CD8-positive, alpha-beta T cell (primary cell): ENCODE measurements at regions of chr18 and their contacts with region 1.

Region 1: GRCh38 chr18:59056706-59057492 is 82.8 kb upstream of the SEC11C start:
- DNase-seq: peak in 4 of 9 experiments; percentile 33 to 55 (median 48)
- ATAC-seq: no peak
- H3K4me3 ChIP-seq: no peak overlapping the region
- H3K4me3 Mint-ChIP-seq: no peak overlapping the region
- H3K27ac ChIP-seq: no peak overlapping the region
- H3K27ac Mint-ChIP-seq: no peak overlapping the region
- H3K4me1 ChIP-seq: no peaks in the 10 kb centered on the region
- H3K4me1 Mint-ChIP-seq: no peaks in the 10 kb centered on the region
- H3K27me3 ChIP-seq: no peaks in the 10 kb centered on the region
- H3K27me3 Mint-ChIP-seq: peaks cover 25% of the 10 kb centered on the region
- CTCF ChIP-seq: peak; percentile 40

Region 2: DNA sequence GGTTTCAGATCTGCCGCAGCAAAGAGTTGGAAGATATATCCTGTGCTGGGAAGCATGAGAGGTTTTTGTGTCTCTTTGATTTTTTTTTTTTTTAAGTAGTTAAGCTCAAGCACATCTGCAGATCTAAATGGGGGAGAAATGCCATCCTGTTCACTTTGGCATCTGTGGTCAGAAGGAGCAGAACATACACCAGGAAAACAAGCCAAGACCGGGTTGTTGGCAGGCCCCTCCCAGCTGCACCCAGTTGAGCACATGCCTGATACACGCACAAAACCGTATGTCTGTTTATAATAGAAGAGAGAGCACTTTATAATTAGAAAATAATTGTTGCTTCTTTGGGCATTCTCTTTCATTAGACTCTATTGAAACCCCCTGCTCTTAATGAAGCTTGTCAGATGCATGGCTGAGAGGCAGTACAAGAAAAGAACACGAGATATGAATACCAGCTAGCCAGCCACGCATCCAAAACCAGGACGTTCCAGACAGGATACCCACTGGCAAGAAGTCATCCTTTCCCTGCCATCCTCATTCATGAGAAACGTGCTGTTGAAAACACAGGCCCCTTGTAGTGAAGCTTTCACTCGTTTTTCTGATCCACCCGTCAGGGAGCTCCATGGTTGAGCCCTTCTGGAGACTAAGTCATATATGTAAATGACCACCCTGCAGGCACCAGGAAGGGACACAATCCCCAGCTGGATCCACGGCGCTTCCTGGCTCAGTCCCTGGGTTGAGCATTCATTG is 580.2 kb before region 1 on chr18:
- CTCF ChIA-PET with region 1: no interaction called
- POLR2A ChIA-PET with region 1: no interaction called
- intact Hi-C with region 1: no loop called
- DNase-seq: no peak
- ATAC-seq: no peak
- H3K4me3 ChIP-seq: no peak overlapping the region
- H3K4me3 Mint-ChIP-seq: no peak overlapping the region
- H3K27ac ChIP-seq: no peak overlapping the region
- H3K27ac Mint-ChIP-seq: no peak overlapping the region
- H3K4me1 ChIP-seq: no peaks in the 10 kb centered on the region
- H3K4me1 Mint-ChIP-seq: no peaks in the 10 kb centered on the region
- H3K27me3 ChIP-seq: no peaks in the 10 kb centered on the region
- H3K27me3 Mint-ChIP-seq: peaks cover 4% of the 10 kb centered on the region
- CTCF ChIP-seq: no peak

Region 3: GRCh38 chr18:58781627-58782194 is 275.2 kb before region 1 on chr18:
- CTCF ChIA-PET with region 1: interaction called, 7 read pairs
- POLR2A ChIA-PET with region 1: no interaction called
- intact Hi-C with region 1: loop called in 1 of 2 experiments (anchors 1 kb)
- DNase-seq: peak; percentile 25 to 76 (median 59)
- ATAC-seq: peak; percentile 61
- H3K4me3 ChIP-seq: no peak overlapping the region
- H3K4me3 Mint-ChIP-seq: no peak overlapping the region
- H3K27ac ChIP-seq: no peak overlapping the region
- H3K27ac Mint-ChIP-seq: no peak overlapping the region
- H3K4me1 ChIP-seq: no peaks in the 10 kb centered on the region
- H3K4me1 Mint-ChIP-seq: no peaks in the 10 kb centered on the region
- H3K27me3 ChIP-seq: peaks cover 0 to 2% of the 10 kb centered on the region in 2 experiments
- H3K27me3 Mint-ChIP-seq: peaks cover 32% of the 10 kb centered on the region
- CTCF ChIP-seq: peak; percentile 76